Right ventricle myocardium superior (tissue), 1 donor: ENCODE measurements at regions of chr14 and their contacts with region 1.

Region 1: GRCh38 chr14:75002392-75003249 is at the start of gene EIF2B2:
- DNase-seq: peak; percentile 99
- ATAC-seq: peak; percentile 100
- total RNA-seq, gene EIF2B2: 29.5 TPM

Region 2: GRCh38 chr14:74712499-74713394 is 289.9 kb before region 1 on chr14 and contains the starts of genes AREL1 and FCF1:
- intact Hi-C with region 1: no loop called
- DNase-seq: peak; percentile 80
- ATAC-seq: peak; percentile 99
- total RNA-seq, gene AREL1: 22.6 TPM
- total RNA-seq, gene FCF1: 35.8 TPM

Region 3: DNA sequence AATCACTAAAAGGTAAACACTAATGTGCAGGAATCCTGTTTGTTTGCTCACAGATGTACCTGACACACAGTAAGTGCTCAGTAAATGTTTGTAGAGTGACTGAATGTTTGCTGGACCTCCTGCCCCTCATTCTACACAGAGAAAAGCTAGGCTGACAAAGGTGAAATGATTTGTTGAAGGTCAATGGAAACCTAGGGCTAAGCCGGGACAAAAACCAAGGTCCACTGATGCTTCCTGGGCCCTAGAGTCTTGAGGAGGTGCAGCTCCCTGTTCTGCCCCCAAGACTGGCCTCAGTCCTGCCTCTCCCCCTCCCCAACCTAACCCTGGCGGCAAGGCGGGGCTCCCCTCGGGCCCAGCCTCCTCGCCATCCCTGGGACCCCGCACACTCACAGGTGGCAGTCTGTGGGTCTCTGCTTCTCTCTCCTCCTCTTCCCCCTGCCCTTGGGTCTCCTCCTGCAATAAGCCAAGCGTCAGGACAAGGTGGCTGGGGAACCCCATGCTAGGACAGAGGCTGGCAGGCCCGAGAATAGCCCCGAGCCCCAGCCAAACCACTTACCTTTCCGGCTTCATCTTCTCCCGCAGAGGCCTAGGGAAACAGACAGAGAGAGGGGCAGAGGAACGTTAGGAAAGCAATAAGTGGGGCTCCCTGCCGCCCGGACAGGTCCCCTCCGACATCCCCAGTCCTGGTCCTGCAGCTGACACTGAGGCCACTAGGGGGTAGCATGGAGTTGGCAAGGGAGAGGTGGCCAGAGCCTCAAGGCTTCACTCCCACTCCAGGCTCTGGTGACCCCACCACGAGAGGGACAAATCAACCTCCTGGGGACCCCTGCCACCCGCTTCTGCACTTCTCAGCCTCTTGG is 56.6 kb before region 1 on chr14:
- intact Hi-C with region 1: loop called (anchors 5 kb)
- DNase-seq: peak; percentile 80
- ATAC-seq: peak; percentile 86